Activated T-helper 2 cell treated with anti-CD3 and anti-CD28 coated beads, Interferon-gamma antibody, Interleukin-2, Interleukin-4, amounts not matched to agents 10 μg/mL and 5 μg/mL and 100 μg/mL, durations not matched to agents 14 hours and 24 hours and 36 hours (primary cell): ENCODE measurements at regions of chr1 and their contacts with region 1.

Region 1: DNA sequence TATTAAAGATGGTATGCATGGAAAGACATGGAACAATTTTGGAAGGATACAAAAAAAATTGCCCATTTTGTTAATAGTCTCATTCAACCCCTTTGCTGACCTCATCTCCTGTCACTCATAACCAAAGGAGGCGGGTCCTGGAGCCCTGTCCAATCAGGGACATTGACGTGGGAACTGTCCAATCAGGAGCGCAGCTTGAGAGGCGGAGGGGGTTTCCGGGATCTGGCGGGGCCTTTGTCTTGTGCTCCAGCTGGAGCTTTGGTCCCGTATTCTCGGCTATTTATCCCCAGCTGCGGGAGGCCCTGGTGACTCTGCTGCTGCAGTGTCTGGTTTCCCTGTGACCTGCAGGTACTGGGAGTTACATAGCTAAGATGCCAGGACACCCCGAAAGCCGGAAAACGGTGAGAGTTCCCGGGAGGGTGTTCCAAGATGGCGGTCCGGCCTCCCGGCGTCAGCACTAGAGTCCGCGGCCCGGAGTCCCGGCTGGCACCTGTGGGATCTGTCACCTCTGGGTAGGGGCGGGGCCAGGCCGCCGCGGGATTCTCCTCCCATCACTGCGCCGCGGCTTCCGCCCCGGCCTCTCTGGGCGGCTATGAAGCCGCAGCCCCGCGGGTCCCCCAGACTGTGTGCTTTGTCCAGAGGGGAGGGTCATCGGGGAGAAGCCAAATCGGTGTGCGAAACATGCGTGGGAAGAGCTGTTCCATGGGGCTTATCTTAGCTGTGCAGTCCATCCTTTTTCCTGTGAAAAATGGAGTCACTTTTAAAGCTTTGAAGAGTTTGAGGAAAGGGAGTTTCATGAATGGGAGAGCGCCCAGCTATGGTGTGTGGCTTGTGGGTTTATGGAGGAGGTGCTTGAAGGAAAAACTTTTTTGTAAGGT is at the start of gene ZNF678:
- DNase-seq: peak; percentile 81
- H3K4me3 Mint-ChIP-seq: peak within 1 kb of the TSS; percentile 87
- H3K27ac Mint-ChIP-seq: peak within 1 kb of the TSS; percentile 87
- H3K4me1 Mint-ChIP-seq: peaks cover 13% of the 10 kb centered on the region
- H3K27me3 Mint-ChIP-seq: peaks cover 24% of the 10 kb centered on the region
- total RNA-seq, gene ZNF678: 5.1 and 5.7 TPM in 2 replicates

Region 2: GRCh38 chr1:227542143-227543120 is 21.1 kb before region 1 on chr1:
- intact Hi-C with region 1: loop called (anchors 1 kb)
- DNase-seq: peak; percentile 83
- H3K4me3 Mint-ChIP-seq: peak overlapping the region; percentile 49
- H3K27ac Mint-ChIP-seq: peak overlapping the region; percentile 42
- H3K4me1 Mint-ChIP-seq: peaks cover 4% of the 10 kb centered on the region
- H3K27me3 Mint-ChIP-seq: peaks cover 6% of the 10 kb centered on the region

Region 3: GRCh38 chr1:227728059-227728891 is 164.7 kb after region 1 on chr1:
- intact Hi-C with region 1: loop called (anchors 2 kb)
- DNase-seq: peak; percentile 39
- H3K4me3 Mint-ChIP-seq: peak overlapping the region; percentile 82
- H3K27ac Mint-ChIP-seq: peak overlapping the region; percentile 9
- H3K4me1 Mint-ChIP-seq: peaks cover 6% of the 10 kb centered on the region
- H3K27me3 Mint-ChIP-seq: no peaks in the 10 kb centered on the region

Region 4: DNA sequence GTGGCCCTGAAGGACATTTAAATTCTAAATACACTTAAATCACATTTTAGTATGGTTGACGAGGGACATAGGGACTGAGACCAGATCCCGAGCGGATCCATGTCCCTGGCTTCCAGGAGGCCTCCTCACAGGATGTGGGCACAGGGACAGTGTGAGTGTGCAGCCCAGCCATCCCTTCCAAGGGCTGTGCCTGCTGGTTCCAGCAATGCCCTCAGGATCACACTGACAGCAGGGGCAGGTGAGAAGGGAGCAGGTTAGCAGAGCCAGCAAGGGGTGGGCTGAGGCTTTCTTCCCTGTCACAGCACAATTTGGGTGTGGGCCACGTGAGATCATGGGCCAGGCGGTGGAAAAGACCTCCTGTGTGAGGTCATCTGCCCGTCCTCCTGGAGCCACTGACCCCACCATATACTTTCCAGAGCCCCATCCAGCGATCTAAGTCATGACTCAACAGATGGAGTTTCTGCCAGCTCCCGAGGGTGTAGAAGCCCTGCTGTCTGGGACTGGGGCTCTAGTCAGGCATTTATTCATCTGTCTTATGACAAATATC is 214.9 kb after region 1 on chr1:
- intact Hi-C with region 1: no loop called
- DNase-seq: no peak
- H3K4me3 Mint-ChIP-seq: no peak overlapping the region
- H3K27ac Mint-ChIP-seq: no peak overlapping the region
- H3K4me1 Mint-ChIP-seq: peaks cover 11% of the 10 kb centered on the region
- H3K27me3 Mint-ChIP-seq: no peaks in the 10 kb centered on the region